Stomach (tissue), 19 donors: ENCODE measurements at regions of chr15 and their contacts with region 1.

Region 1: DNA sequence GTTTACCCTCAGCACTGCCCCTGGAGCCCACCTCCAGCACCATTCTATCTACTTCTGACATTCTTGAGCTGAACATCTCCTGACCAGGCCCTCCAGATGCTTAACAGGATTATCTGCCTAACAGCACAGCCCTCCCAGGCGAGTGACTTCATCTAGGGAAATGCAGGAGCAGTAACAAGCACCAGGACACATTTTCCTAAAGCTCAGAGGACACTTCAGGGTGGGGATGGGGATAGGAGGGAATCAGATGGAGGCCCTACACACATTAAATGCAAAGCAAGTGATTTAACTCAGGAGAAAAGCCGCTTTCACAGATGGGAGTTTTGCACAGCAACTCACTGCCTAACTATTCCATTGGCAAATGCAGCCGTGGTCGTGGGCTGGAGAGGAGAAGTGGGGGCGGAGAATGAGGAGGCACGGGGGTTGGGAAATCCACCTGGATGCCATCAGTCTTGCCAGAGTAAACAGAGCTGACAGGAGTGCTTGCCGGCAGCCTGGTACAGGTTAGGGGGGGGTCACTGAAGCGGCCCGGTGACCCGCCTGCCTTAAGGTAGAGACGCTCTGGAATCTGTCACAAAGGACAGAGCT is 21.3 kb upstream of the BNC1 start:
- DNase-seq: peak in 1 of 2 donors; percentile 78
- H3K4me3 ChIP-seq: no peak overlapping the region
- H3K27ac ChIP-seq: no peak overlapping the region
- H3K4me1 ChIP-seq: peaks cover 0 to 13% (median 3%) of the 10 kb centered on the region in 4 donors
- H3K27me3 ChIP-seq: peaks cover 0 to 33% (median 19%) of the 10 kb centered on the region in 3 donors
- CTCF ChIP-seq: no peak
- EP300 ChIP-seq: no peak
- POLR2A ChIP-seq: no peak

Region 2: GRCh38 chr15:83192742-83193141 is 113.1 kb before region 1 on chr15:
- intact Hi-C with region 1: no loop called
- DNase-seq: no peak
- H3K4me3 ChIP-seq: no peak overlapping the region
- H3K27ac ChIP-seq: no peak overlapping the region
- H3K4me1 ChIP-seq: peaks cover 0 to 6% (median 3%) of the 10 kb centered on the region in 4 donors
- H3K27me3 ChIP-seq: no peaks in the 10 kb centered on the region
- CTCF ChIP-seq: no peak
- EP300 ChIP-seq: no peak
- POLR2A ChIP-seq: no peak

Region 3: DNA sequence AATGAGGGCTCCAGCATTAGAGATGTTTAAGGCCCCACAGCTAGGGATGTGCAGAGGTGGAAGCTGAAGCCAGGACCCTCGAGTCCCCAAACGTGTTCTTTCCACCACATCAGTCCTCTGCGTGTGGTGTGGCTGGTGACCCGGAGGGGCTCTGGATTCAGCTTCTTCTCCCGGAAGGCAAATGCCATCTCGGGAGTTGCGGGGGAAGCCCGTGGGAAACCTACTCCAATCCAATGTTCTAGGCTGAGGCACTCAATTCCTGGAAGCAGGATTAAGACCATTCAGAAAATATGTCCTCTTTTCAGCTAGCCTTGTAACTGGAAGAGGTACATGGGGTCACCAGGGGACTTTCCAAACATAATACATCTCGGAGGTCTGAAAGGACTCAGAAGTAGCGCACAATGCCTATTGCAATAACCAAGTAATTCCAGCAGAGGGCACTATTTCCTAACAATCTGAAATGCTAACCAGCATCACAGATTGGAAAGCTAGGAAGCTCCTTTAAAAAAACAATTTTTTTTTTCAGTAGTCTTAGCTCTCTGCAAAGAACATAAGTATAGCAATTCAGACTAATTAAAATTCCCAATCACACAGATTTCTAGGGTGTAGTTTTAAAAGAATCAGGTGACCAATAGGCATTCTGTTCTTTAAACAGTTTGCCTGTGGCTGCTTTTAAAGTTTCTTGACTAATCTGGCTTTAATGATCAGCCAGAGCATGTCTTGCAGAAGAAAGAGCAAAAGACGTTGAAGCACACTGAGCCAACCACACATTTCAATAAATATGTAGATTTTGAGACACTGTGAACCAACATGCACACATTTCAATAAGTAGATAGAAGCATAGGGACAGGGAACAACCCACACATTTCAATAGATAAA is 57.4 kb before region 1 on chr15:
- intact Hi-C with region 1: loop called (anchors 10 kb)
- DNase-seq: peak in 1 of 2 donors; percentile 85
- H3K4me3 ChIP-seq: no peak overlapping the region
- H3K27ac ChIP-seq: no peak overlapping the region
- H3K4me1 ChIP-seq: peaks cover 0 to 4% (median 2%) of the 10 kb centered on the region in 4 donors
- H3K27me3 ChIP-seq: peaks cover 0 to 70% (median 10%) of the 10 kb centered on the region in 3 donors
- CTCF ChIP-seq: peak in 6 of 7 experiments; percentile 58 to 94 (median 84)
- EP300 ChIP-seq: no peak
- POLR2A ChIP-seq: no peak